Activated B cell treated with CpG ODN at 0.5 μM for 24 hours (primary cell): ENCODE measurements at regions of chr17 and their contacts with region 1.

Region 1: DNA sequence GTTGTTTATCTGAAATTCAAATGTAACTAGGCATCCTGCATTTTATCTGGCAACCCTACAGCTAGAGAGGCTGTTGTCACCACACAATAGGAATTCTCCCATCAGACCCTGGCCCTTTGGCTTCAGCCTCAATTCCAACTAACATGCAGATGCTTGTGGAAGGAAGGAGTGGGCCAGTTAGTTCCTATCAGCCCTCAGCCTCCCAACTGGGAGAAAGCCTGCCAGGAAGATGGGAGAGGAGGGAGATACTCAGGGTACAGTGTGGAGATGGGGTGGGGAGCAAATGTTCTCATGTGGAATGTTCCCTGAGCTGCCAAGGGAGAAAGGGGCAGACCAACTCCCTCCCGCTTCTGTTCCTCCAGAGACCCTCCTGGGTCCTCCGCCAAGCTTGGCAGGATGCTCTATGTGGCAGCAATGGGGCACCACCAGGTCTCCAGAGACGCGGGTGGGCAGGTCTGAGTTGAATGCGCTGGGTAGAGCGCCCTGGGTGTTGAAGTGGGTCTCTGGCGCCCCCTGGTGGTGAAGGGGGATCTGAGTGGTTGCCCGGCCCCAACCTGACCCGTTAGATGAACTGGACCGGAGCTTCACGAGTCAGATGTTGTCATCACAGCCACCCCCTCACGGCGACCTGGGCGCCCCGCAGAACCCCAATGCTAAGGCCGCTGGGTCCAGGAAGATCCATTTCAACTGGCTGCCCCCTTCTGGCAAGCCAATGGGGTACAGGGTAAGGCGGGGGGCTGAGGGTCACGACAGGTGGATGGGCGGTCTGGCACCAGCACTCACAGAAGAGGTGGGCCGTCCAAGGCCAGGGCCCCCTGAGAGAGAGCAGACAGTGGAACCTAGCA is 15.2 kb downstream of the GALK1 start:
- DNase-seq: peak; percentile 91
- ATAC-seq: peak; percentile 76
- H3K4me3 Mint-ChIP-seq: no peak overlapping the region
- H3K27ac Mint-ChIP-seq: peak overlapping the region; percentile 12
- H3K4me1 Mint-ChIP-seq: peaks cover 17% of the 10 kb centered on the region
- H3K27me3 Mint-ChIP-seq: no peaks in the 10 kb centered on the region
- CTCF ChIP-seq: no peak

Region 2: GRCh38 chr17:75476271-75476671 is 273.5 kb before region 1 on chr17:
- CTCF ChIA-PET with region 1: no interaction called
- POLR2A ChIA-PET with region 1: no interaction called
- intact Hi-C with region 1: no loop called
- DNase-seq: no peak
- ATAC-seq: no peak
- H3K4me3 Mint-ChIP-seq: no peak overlapping the region
- H3K27ac Mint-ChIP-seq: no peak overlapping the region
- H3K4me1 Mint-ChIP-seq: no peaks in the 10 kb centered on the region
- H3K27me3 Mint-ChIP-seq: no peaks in the 10 kb centered on the region
- CTCF ChIP-seq: no peak

Region 3: GRCh38 chr17:75515496-75516254 is 234.1 kb before region 1 on chr17 and contains the start of gene CASKIN2:
- CTCF ChIA-PET with region 1: interaction called, 3 read pairs
- POLR2A ChIA-PET with region 1: no interaction called
- intact Hi-C with region 1: loop called (anchors 5 kb)
- DNase-seq: peak; percentile 80
- ATAC-seq: peak; percentile 68
- H3K4me3 Mint-ChIP-seq: peak within 1 kb of the TSS; percentile 82
- H3K27ac Mint-ChIP-seq: no peak within 1 kb of the TSS
- H3K4me1 Mint-ChIP-seq: peaks cover 22% of the 10 kb centered on the region
- H3K27me3 Mint-ChIP-seq: no peaks in the 10 kb centered on the region
- CTCF ChIP-seq: peak; percentile 43
- total RNA-seq, gene CASKIN2: 1.2 and 1.4 TPM in 2 replicates

Region 4: GRCh38 chr17:75619506-75620431 is 130.0 kb before region 1 on chr17:
- CTCF ChIA-PET with region 1: interaction called, 15 read pairs
- POLR2A ChIA-PET with region 1: interaction called, 4 read pairs
- intact Hi-C with region 1: no loop called
- DNase-seq: no peak
- ATAC-seq: no peak
- H3K4me3 Mint-ChIP-seq: no peak overlapping the region
- H3K27ac Mint-ChIP-seq: no peak overlapping the region
- H3K4me1 Mint-ChIP-seq: no peaks in the 10 kb centered on the region
- H3K27me3 Mint-ChIP-seq: no peaks in the 10 kb centered on the region
- CTCF ChIP-seq: no peak

Region 5: GRCh38 chr17:75667021-75667790 is 82.6 kb before region 1 on chr17 and contains the starts of genes RECQL5 and SAP30BP:
- CTCF ChIA-PET with region 1: interaction called, 66 read pairs
- POLR2A ChIA-PET with region 1: interaction called, 14 read pairs
- intact Hi-C with region 1: no loop called
- DNase-seq: peak; percentile 95
- ATAC-seq: peak; percentile 74
- H3K4me3 Mint-ChIP-seq: peak within 1 kb of the TSS; percentile 55
- H3K27ac Mint-ChIP-seq: peak within 1 kb of the TSS; percentile 27
- H3K4me1 Mint-ChIP-seq: peaks cover 47% of the 10 kb centered on the region
- H3K27me3 Mint-ChIP-seq: no peaks in the 10 kb centered on the region
- CTCF ChIP-seq: no peak
- total RNA-seq, gene RECQL5: 55.9 and 65.4 TPM in 2 replicates
- total RNA-seq, gene SAP30BP: 177 and 184 TPM in 2 replicates

Region 6: DNA sequence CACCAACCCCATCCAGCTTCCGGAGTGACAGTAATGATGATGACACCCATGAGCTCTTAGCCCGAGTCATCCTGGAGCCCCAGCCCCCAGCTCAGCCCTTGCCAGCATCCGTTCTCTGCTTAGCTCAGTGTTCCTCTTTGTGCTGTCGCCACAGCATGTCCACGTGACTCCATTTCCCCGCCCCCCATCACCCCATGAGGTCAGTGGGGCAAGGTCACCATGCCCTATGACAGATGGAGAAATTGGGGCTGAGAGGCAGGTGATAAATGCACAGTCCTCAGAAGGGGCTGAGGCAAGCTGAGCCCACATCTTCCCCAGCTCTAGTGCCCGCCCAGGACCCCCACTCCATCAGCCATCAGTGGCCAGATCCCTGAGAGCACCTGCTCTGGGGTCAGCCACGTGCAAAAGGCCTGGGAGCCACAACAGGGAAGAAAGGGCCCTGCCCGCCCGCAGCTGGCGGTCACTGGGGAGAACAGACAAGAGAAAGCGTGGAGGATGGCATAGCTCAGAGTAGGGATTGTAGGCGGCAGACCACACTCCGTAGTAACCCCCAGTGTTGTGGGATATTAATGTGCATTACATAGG is 11.5 kb before region 1 on chr17:
- CTCF ChIA-PET with region 1: interaction called, 10 read pairs
- POLR2A ChIA-PET with region 1: interaction called, 7 read pairs
- intact Hi-C with region 1: no loop called
- DNase-seq: no peak
- ATAC-seq: no peak
- H3K4me3 Mint-ChIP-seq: no peak overlapping the region
- H3K27ac Mint-ChIP-seq: peak overlapping the region; percentile 6
- H3K4me1 Mint-ChIP-seq: peaks cover 12% of the 10 kb centered on the region
- H3K27me3 Mint-ChIP-seq: no peaks in the 10 kb centered on the region
- CTCF ChIP-seq: no peak

Region 7: DNA sequence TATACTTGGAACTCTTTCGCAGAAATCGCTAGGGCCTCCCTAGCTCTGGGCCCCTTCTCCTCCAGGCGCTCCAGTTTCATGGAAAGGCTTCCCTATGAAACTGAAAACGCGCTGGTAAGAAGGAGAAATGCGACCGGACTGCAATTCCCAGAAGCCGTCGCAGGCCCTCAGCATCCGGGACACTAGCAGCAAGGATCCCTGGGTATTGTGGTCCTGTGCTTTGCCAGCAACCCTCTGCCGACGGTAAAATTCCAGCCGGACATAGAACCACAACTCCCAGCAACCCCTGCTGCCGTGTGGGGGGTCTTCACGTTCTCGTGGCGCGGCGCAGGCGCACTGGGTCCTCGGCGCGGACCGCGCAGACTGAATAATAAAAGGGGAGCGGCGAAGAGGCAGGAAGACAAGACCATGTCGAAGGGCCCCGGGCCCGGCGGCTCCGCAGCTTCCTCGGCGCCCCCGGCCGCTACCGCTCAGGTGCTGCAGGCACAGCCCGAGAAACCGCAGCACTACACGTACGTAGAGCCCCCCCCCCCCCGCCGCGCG is 34.8 kb after region 1 on chr17 and contains the start of gene UNK:
- CTCF ChIA-PET with region 1: interaction called, 12 read pairs
- POLR2A ChIA-PET with region 1: interaction called, 48 read pairs
- intact Hi-C with region 1: no loop called
- DNase-seq: peak; percentile 89
- ATAC-seq: peak; percentile 73
- H3K4me3 Mint-ChIP-seq: peak within 1 kb of the TSS; percentile 86
- H3K27ac Mint-ChIP-seq: peak within 1 kb of the TSS; percentile 99
- H3K4me1 Mint-ChIP-seq: peaks cover 57% of the 10 kb centered on the region
- H3K27me3 Mint-ChIP-seq: no peaks in the 10 kb centered on the region
- CTCF ChIP-seq: no peak
- total RNA-seq, gene UNK: 52.3 and 61.2 TPM in 2 replicates

Region 8: GRCh38 chr17:75814900-75815373 is 65.2 kb after region 1 on chr17:
- CTCF ChIA-PET with region 1: no interaction called
- POLR2A ChIA-PET with region 1: no interaction called
- intact Hi-C with region 1: no loop called
- DNase-seq: no peak
- ATAC-seq: no peak
- H3K4me3 Mint-ChIP-seq: no peak overlapping the region
- H3K27ac Mint-ChIP-seq: no peak overlapping the region
- H3K4me1 Mint-ChIP-seq: no peaks in the 10 kb centered on the region
- H3K27me3 Mint-ChIP-seq: no peaks in the 10 kb centered on the region
- CTCF ChIP-seq: no peak

Region 9: GRCh38 chr17:75896415-75897159 is 146.8 kb after region 1 on chr17 and contains the start of gene TRIM65:
- CTCF ChIA-PET with region 1: interaction called, 10 read pairs
- POLR2A ChIA-PET with region 1: interaction called, 5 read pairs
- intact Hi-C with region 1: no loop called
- DNase-seq: peak; percentile 86
- ATAC-seq: peak; percentile 85
- H3K4me3 Mint-ChIP-seq: peak within 1 kb of the TSS; percentile 82
- H3K27ac Mint-ChIP-seq: peak within 1 kb of the TSS; percentile 73
- H3K4me1 Mint-ChIP-seq: peaks cover 27% of the 10 kb centered on the region
- H3K27me3 Mint-ChIP-seq: no peaks in the 10 kb centered on the region
- CTCF ChIP-seq: no peak
- total RNA-seq, gene TRIM65: 20.0 and 22.4 TPM in 2 replicates

Region 10: DNA sequence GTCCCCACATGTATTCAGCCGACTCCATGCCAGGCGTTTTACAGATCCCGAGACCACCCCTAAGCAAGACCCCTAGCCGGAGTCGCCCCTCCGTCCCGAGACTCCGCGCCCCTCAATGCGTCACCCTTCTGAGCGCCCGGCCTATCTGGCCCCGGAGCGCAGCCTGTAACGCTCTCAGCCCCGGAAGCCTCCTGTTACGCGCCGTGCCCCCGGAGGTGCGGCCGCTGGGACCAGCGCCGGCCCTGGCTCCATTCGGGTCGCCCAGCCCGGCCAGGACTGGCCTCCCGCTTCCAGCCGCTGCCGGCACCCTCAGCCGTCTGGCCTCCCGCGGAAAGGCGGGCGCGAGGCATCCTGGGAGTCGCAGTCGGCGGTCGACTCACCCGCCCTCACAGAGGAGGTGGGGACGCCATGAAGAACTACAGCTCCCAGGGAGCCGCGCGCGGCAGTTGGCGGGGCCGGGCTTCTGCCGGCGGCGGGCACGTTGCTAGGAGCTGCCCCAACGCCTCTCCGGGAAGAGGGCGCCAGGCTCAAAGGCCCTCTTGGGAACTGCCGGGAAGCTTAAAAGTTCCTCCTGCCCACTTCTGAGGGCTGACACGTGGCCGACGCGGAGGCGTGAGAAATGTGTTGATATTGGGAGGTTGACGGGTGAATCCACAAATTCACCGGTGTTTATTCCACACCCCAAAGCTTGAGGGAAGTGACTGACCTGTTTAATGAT is 191.1 kb after region 1 on chr17 and contains the start of gene FBF1:
- CTCF ChIA-PET with region 1: no interaction called
- POLR2A ChIA-PET with region 1: no interaction called
- intact Hi-C with region 1: no loop called
- DNase-seq: peak; percentile 83
- ATAC-seq: peak; percentile 100
- H3K4me3 Mint-ChIP-seq: peak within 1 kb of the TSS; percentile 86
- H3K27ac Mint-ChIP-seq: peak within 1 kb of the TSS; percentile 61
- H3K4me1 Mint-ChIP-seq: peaks cover 13% of the 10 kb centered on the region
- H3K27me3 Mint-ChIP-seq: no peaks in the 10 kb centered on the region
- CTCF ChIP-seq: no peak
- total RNA-seq, gene FBF1: 13.2 and 15.1 TPM in 2 replicates

Region 11: GRCh38 chr17:76264755-76265596 is 515.2 kb after region 1 on chr17 and contains the start of gene UBALD2:
- CTCF ChIA-PET with region 1: no interaction called
- POLR2A ChIA-PET with region 1: no interaction called
- intact Hi-C with region 1: no loop called
- DNase-seq: peak; percentile 97
- ATAC-seq: peak; percentile 77
- H3K4me3 Mint-ChIP-seq: peak within 1 kb of the TSS; percentile 92
- H3K27ac Mint-ChIP-seq: peak within 1 kb of the TSS; percentile 94
- H3K4me1 Mint-ChIP-seq: peaks cover 80% of the 10 kb centered on the region
- H3K27me3 Mint-ChIP-seq: no peaks in the 10 kb centered on the region
- CTCF ChIP-seq: no peak
- total RNA-seq, gene UBALD2: 144 and 152 TPM in 2 replicates